ENCODE measurements at regions of chr18 and their contacts with region 1.

Region 1: DNA sequence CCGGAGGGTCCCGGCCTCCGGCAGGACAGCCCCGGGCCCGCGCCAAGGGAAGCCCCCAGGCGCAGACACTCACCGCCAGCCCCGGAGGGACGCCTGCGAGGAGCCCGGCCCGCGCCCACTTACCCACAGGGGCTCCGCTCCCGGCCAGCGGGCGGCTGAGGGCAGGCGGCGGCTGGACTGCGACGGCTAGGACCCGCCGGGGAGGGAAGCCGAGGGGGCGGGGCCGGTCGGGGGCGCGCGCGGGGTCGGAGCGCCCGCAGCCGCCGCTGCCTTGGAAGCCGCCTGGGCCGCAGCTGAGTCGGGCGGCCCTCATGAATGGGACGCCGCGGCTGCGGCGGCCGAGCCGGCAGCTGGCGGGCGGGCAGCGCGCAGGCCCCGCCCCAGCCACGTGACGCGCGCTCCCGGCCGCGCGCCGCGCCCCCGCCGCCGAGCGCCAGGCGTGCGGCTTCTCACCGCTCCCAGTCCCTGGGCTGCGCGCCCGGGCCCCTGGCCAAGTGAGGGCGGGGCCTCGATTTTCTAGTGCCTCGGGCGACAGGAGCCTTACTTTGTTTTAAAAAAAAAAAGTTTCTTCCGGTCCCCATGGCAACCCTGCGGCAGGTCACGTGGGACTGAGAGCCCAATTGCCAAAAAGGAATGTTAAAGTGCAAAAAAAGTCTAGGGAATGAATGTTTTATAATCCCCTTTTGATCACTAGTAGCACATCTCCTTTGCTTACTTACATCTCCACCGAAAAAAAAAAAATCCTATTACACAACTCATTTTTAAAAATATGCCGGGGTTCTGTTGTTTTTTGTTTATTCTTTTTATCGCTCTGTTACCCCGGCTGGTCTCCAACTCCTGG is at the start of gene LPIN2:
- DNase-seq: peak; percentile 98
- H3K4me3 ChIP-seq: peak within 1 kb of the TSS; percentile 74 to 96 (median 94)
- H3K27ac ChIP-seq: peak within 1 kb of the TSS; percentile 90
- H3K4me1 ChIP-seq: peaks cover 67% of the 10 kb centered on the region
- H3K27me3 ChIP-seq: no peaks in the 10 kb centered on the region
- CTCF ChIP-seq: no peak
- POLR2A ChIP-seq: peak; percentile 61
- total RNA-seq, gene LPIN2: 21.8 and 24.4 TPM in 2 replicates

Region 2: GRCh38 chr18:2655178-2655953 is 357.8 kb before region 1 on chr18 and contains the start of gene SMCHD1:
- CTCF ChIA-PET with region 1: no interaction called
- POLR2A ChIA-PET with region 1: no interaction called
- dilution Hi-C with region 1: no loop called
- intact Hi-C with region 1: loop called (anchors 5 kb)
- DNase-seq: peak; percentile 81
- H3K4me3 ChIP-seq: peak within 1 kb of the TSS; percentile 60 to 99 (median 78)
- H3K27ac ChIP-seq: peak within 1 kb of the TSS; percentile 90
- H3K4me1 ChIP-seq: peaks cover 32% of the 10 kb centered on the region
- H3K27me3 ChIP-seq: peaks cover 0 to 4% of the 10 kb centered on the region in 2 experiments
- CTCF ChIP-seq: no peak
- POLR2A ChIP-seq: peak; percentile 36
- total RNA-seq, gene SMCHD1: 36.2 and 39.9 TPM in 2 replicates

Region 3: DNA sequence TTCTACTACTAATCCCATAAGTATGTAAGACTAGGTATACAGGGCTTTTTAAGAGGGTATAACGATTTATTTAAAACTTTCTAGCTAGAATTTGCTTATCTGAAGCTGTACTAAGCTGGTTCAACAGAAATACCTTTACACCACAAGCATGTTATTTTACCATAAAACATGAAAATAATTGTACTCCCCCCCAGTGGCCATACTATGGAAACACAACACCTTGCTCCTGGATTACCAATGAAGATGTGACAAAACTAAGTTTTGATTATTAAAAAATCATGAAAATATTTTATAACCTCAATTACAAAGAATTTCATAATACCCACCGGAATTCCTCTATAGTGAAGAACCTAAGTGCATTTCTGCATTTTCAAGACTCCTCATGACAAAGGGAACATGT is 27.6 kb before region 1 on chr18:
- CTCF ChIA-PET with region 1: interaction called, 26 read pairs
- POLR2A ChIA-PET with region 1: no interaction called
- dilution Hi-C with region 1: no loop called
- intact Hi-C with region 1: loop called (anchors 1 kb)
- DNase-seq: peak; percentile 48
- H3K4me3 ChIP-seq: no peak overlapping the region
- H3K27ac ChIP-seq: no peak overlapping the region
- H3K4me1 ChIP-seq: peaks cover 49% of the 10 kb centered on the region
- H3K27me3 ChIP-seq: no peaks in the 10 kb centered on the region
- CTCF ChIP-seq: peak; percentile 26 to 39
- POLR2A ChIP-seq: no peak

Region 4: DNA sequence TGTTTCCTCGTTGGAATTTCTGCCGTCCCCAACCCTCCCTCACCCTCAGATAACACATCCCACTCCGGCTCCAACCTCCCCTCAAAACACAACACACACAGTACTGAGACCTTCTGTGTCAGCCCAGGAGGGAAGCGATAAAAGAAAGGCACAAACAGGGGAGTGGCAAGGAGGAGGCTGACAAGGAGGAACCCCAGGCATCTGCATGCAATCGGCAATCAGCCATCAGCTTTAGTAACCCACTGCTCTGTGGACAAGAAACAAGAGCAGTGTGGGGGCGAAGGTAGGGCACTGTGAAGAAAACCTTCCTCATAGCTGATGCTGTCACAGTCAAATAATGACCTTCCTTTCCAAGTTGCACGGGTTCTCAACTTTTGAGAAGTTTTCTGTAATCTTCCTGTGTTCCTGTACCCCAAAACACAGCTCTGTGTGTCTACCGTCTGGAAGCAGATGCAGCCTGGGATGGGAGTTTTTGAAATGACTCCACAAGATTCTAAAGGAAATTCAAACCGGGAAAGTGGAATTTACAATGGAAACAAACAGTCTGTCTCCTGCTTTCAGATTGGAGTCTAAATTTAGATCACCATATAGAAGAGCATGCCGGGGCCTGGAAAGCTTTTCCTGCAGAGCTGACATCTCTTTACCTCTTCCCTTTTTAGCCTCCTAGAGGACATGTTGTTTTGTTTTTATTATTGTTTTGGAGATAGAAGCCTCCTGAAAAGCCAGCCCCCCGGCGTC is 16.2 kb after region 1 on chr18:
- CTCF ChIA-PET with region 1: interaction called, 4 read pairs
- POLR2A ChIA-PET with region 1: no interaction called
- dilution Hi-C with region 1: no loop called
- intact Hi-C with region 1: loop called (anchors 1 kb)
- DNase-seq: peak; percentile 72
- H3K4me3 ChIP-seq: no peak overlapping the region
- H3K27ac ChIP-seq: no peak overlapping the region
- H3K4me1 ChIP-seq: peaks cover 9% of the 10 kb centered on the region
- H3K27me3 ChIP-seq: no peaks in the 10 kb centered on the region
- CTCF ChIP-seq: no peak
- POLR2A ChIP-seq: no peak

Region 5: DNA sequence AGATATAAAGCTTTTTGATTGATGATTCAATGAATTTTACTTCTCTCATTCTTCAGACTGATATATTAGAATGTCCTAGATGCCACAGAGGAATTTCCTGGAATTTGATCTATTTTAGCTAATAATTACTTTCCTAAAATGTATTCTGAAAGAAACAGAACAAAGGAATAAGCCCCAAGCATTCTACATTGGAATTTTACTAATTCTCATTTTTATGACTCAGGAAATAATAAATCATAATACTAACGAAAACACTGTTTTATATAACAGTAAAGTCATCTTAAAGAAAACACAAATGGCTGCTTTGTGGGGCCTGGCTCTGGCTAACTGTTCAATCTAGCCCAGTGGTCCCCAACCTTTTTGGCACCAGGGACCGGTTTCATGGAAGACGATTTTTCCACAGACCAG is 68.4 kb after region 1 on chr18:
- CTCF ChIA-PET with region 1: interaction called, 3 read pairs
- POLR2A ChIA-PET with region 1: no interaction called
- dilution Hi-C with region 1: no loop called
- intact Hi-C with region 1: loop called (anchors 1 kb)
- DNase-seq: peak; percentile 75
- H3K4me3 ChIP-seq: no peak overlapping the region
- H3K27ac ChIP-seq: peak overlapping the region; percentile 53
- H3K4me1 ChIP-seq: peaks cover 37% of the 10 kb centered on the region
- H3K27me3 ChIP-seq: no peaks in the 10 kb centered on the region
- CTCF ChIP-seq: no peak
- POLR2A ChIP-seq: no peak

Region 6: DNA sequence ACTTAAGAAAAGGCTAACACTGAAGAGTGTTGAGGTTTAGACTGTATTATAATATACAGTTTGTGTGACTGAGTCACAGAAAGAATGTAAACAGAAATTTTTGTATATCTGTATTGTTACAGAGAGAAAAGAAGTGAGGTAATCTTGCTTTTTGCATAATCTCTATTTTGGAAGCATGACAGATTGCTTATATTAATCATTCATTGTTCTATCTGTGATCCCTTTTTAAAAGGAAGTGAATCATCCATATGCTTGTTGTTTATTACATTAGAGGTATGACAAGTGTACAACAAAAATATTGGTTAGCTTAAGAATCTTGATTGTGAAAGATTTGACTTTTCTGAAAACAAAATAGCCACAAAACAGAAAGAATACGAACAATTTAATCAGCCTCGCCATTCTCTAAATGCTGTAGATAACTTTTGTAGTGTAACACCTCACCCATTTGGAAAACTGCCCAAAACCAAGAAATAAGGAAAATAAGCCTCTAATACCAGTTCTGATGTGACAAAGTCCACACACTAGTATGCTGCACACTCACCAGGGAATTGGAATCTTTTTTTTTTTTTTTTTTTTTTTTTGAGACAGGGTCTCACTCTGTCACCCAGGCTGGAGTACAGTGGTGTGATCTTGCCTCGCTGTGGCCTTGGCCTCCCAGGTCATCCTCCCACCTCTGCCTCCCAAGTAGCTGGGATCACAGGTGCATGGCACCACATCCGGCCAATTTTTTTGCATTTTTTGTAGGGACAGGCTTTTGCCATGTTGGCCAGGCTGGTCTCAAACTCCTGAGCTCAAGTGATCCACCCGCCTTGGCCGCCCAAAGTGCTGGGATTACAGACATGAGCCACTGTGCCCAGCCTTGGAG is 91.2 kb after region 1 on chr18:
- CTCF ChIA-PET with region 1: interaction called, 4 read pairs
- POLR2A ChIA-PET with region 1: no interaction called
- dilution Hi-C with region 1: no loop called
- intact Hi-C with region 1: loop called (anchors 1 kb)
- DNase-seq: peak; percentile 91
- H3K4me3 ChIP-seq: peak overlapping the region in 1 of 3 experiments; percentile 21
- H3K27ac ChIP-seq: peak overlapping the region; percentile 96
- H3K4me1 ChIP-seq: peaks cover 30% of the 10 kb centered on the region
- H3K27me3 ChIP-seq: no peaks in the 10 kb centered on the region
- CTCF ChIP-seq: no peak
- POLR2A ChIP-seq: no peak

Region 7: DNA sequence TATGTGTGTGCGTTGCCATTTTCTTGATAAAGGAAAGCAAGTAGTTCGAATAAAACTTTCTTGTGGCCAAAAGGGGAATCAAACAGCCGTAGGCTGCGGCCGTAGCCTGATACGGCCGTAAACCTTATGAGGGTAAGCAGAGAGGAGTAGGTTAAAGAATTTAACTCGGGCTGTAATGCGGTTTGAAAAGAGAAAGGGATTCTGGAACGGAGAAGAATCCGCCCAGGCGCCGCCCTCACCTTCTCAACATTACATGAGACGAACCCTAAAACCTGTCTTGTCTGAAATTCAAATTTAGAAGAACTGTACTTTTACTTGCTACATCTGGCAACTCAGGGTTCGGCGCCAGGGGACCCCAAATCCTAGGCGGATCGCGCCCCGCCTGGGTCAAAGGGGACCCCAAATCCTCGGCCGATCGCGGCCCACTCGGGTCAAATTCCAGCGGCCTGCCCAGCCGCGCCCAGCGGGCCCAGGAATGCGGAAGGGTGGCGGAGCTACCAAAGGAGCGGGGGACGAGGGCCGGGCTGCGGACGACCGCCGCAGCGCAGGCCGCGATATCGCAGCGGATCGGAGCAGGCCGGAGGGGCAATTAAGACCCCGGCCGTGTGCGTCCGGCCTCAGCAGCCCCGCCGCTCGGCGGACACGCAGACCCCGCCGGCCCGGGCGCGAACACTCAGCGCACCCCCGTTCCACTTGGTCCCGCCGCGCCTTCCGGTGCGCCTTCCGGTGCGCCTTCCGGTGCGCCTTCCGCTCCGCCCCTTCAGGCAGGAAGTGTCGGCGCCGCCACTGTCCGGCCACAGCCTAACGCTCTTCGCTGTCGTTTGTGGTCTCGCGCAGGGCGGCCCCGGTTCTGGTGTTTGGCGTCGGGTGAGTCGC is 248.4 kb after region 1 on chr18 and contains the start of gene MYL12B:
- CTCF ChIA-PET with region 1: no interaction called
- POLR2A ChIA-PET with region 1: no interaction called
- dilution Hi-C with region 1: no loop called
- intact Hi-C with region 1: loop called (anchors 5 kb)
- DNase-seq: peak; percentile 80
- H3K4me3 ChIP-seq: peak within 1 kb of the TSS; percentile 93 to 100 (median 97)
- H3K27ac ChIP-seq: peak within 1 kb of the TSS; percentile 94
- H3K4me1 ChIP-seq: peaks cover 36% of the 10 kb centered on the region
- H3K27me3 ChIP-seq: no peaks in the 10 kb centered on the region
- CTCF ChIP-seq: no peak
- POLR2A ChIP-seq: peak; percentile 75
- total RNA-seq, gene MYL12B: 634 and 638 TPM in 2 replicates

Measured in endothelial cell of umbilical vein (primary cell).